Activated naive CD4-positive, alpha-beta T cell treated with anti-CD3 and anti-CD28 coated beads for 36 hours (primary cell): ENCODE measurements at regions of chr2 and their contacts with region 1.

Region 1: DNA sequence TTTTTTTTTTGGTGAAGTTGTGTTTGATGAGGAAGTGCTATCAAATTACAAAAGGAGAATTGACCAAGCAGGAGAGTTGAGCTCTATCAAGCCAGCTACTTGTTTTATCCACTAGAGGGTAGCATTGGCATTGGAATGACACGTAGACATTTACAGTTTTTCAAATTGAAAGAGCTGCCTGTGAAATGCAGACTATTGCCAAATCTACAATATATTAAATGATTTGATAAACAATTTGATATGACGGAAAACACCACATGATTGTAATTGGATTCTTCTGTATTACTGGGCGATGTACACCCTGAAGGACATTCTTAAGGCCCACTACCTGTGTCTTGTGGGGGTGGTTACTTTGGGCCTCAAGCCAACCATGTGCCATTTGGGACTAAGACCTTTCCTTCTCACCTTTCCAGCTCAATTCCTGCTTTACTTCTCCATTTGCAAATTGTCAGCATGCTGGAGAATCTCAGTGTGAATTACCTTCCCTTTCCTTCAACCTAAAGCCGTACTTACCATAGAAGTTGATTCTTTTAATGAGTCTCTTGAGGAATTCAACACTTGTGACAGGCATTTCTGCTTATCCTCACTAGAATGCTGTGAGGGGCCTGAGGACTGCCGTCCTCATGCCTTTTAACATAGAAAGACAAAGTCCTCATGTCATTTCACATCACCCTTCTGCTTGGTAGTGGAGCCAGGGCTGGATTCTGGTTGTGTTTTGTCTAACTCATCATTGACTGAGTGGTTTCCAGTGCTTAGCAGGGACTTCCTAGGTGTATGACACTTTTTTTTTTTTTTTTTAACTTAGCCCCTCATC is 134.8 kb upstream of the THUMPD2 start:
- DNase-seq: no peak
- H3K4me3 Mint-ChIP-seq: no peak overlapping the region
- H3K27ac Mint-ChIP-seq: peak overlapping the region; percentile 15
- H3K4me1 Mint-ChIP-seq: peaks cover 5% of the 10 kb centered on the region
- H3K27me3 Mint-ChIP-seq: peaks cover 13% of the 10 kb centered on the region

Region 2: DNA sequence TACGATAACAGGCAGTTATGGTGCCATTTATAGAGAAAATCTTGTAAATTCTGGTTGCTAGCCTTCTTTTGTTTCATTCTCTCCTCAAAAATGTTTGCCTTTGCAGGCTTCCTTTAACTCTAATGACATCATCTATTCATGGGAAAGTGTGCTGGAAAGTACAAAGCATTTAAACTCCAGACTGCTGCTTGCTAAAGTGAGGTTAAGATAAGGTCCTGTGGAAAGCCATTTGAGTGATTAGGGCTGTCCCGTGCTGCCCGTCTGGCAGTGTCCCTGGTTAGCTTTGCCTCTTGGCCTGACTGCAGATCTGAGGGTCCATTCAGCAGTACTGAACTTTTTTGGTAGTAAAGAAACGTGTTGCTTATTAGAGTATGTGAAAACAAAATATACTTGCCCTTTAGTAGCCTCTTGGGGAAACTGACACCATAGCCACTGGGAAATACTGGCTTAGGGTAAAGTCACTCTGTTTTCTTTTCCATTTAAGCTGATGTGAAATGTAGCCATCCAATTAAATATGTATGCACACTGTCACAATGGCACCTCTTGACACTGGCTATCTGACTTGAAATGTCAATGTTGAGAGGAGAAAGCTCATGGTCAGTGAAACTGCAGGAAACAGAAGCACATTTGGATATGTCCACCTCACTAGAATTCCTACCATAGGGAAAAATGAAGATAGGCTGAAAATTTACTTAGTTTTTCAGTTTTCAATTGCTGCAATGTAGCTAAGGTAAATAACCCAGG is 216.6 kb after region 1 on chr2:
- CTCF ChIA-PET with region 1: no interaction called
- intact Hi-C with region 1: loop called (anchors 10 kb)
- DNase-seq: no peak
- H3K4me3 Mint-ChIP-seq: no peak overlapping the region
- H3K27ac Mint-ChIP-seq: no peak overlapping the region
- H3K4me1 Mint-ChIP-seq: no peaks in the 10 kb centered on the region
- H3K27me3 Mint-ChIP-seq: no peaks in the 10 kb centered on the region

Region 3: GRCh38 chr2:40227210-40227609 is 313.4 kb after region 1 on chr2:
- CTCF ChIA-PET with region 1: no interaction called
- intact Hi-C with region 1: loop called (anchors 5 kb)
- DNase-seq: no peak
- H3K4me3 Mint-ChIP-seq: no peak overlapping the region
- H3K27ac Mint-ChIP-seq: no peak overlapping the region
- H3K4me1 Mint-ChIP-seq: no peaks in the 10 kb centered on the region
- H3K27me3 Mint-ChIP-seq: no peaks in the 10 kb centered on the region

Region 4: GRCh38 chr2:40554668-40555285 is 640.9 kb after region 1 on chr2:
- CTCF ChIA-PET with region 1: interaction called, 27 read pairs
- intact Hi-C with region 1: loop called (anchors 1 kb)
- DNase-seq: peak; percentile 71
- H3K4me3 Mint-ChIP-seq: no peak overlapping the region
- H3K27ac Mint-ChIP-seq: no peak overlapping the region
- H3K4me1 Mint-ChIP-seq: no peaks in the 10 kb centered on the region
- H3K27me3 Mint-ChIP-seq: peaks cover 3% of the 10 kb centered on the region

Region 5: GRCh38 chr2:41393621-41394020 is 1479.8 kb after region 1 on chr2:
- CTCF ChIA-PET with region 1: no interaction called
- intact Hi-C with region 1: loop called (anchors 10 kb)
- DNase-seq: no peak
- H3K4me3 Mint-ChIP-seq: no peak overlapping the region
- H3K27ac Mint-ChIP-seq: no peak overlapping the region
- H3K4me1 Mint-ChIP-seq: no peaks in the 10 kb centered on the region
- H3K27me3 Mint-ChIP-seq: no peaks in the 10 kb centered on the region

Region 6: GRCh38 chr2:41782306-41783158 is 1868.7 kb after region 1 on chr2:
- CTCF ChIA-PET with region 1: interaction called, 4 read pairs
- intact Hi-C with region 1: loop called (anchors 1 kb)
- DNase-seq: peak; percentile 50
- H3K4me3 Mint-ChIP-seq: no peak overlapping the region
- H3K27ac Mint-ChIP-seq: no peak overlapping the region
- H3K4me1 Mint-ChIP-seq: no peaks in the 10 kb centered on the region
- H3K27me3 Mint-ChIP-seq: peaks cover 7% of the 10 kb centered on the region